ENCODE measurements at regions of chr5 and their contacts with region 1.

Region 1: DNA sequence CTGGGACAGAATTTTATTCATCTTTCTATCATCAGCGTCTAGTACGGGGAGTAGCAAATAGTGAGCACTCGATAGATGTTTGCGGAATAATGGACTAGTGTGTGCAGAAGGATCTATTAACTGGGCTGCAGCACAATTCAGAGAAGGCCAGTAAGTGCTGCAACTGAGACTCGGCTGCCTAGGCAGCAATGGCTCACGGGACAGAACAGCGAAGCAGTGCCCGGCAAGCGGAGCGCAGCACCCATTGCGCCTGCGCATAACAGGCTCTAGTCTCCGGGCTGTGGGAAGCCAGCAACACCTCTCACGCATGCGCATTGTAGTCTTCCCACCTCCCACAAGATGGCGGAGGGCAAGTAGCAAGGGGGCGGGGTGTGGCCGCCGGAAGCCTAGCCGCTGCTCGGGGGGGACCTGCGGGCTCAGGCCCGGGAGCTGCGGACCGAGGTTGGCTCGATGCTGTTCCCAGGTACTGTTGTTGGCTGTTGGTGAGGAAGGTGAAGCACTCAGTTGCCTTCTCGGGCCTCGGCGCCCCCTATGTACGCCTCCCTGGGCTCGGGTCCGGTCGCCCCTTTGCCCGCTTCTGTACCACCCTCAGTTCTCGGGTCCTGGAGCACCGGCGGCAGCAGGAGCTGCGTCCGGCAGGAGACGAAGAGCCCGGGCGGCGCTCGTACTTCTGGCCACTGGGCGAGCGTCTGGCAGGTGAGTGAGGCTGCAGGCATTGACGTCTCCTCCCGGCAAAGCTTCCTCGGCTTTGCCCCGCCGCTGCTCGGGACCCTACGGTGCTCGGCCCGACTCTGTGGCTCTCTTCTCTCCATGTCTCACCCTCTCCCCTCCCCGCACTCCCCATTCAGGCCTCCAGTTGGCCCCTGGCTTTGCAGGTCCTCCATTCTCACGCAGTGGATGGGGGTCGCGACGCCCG is 30.2 kb upstream of the APC start:
- DNase-seq: peak; percentile 86
- ATAC-seq: peak; percentile 95
- H3K4me3 Mint-ChIP-seq: peak overlapping the region; percentile 95
- H3K27ac Mint-ChIP-seq: peak overlapping the region; percentile 87
- H3K4me1 Mint-ChIP-seq: peaks cover 49% of the 10 kb centered on the region
- H3K27me3 Mint-ChIP-seq: no peaks in the 10 kb centered on the region
- CTCF ChIP-seq: no peak

Region 2: GRCh38 chr5:111092062-111092853 is 1615.2 kb before region 1 on chr5 and contains the start of gene WDR36:
- CTCF ChIA-PET with region 1: no interaction called
- POLR2A ChIA-PET with region 1: no interaction called
- intact Hi-C with region 1: loop called (anchors 10 kb)
- DNase-seq: peak; percentile 88
- ATAC-seq: peak; percentile 95
- H3K4me3 Mint-ChIP-seq: peak within 1 kb of the TSS; percentile 96
- H3K27ac Mint-ChIP-seq: peak within 1 kb of the TSS; percentile 90
- H3K4me1 Mint-ChIP-seq: peaks cover 31% of the 10 kb centered on the region
- H3K27me3 Mint-ChIP-seq: peaks cover 6% of the 10 kb centered on the region
- CTCF ChIP-seq: no peak
- total RNA-seq, gene WDR36: 42.6 and 48.6 TPM in 2 replicates

Region 3: DNA sequence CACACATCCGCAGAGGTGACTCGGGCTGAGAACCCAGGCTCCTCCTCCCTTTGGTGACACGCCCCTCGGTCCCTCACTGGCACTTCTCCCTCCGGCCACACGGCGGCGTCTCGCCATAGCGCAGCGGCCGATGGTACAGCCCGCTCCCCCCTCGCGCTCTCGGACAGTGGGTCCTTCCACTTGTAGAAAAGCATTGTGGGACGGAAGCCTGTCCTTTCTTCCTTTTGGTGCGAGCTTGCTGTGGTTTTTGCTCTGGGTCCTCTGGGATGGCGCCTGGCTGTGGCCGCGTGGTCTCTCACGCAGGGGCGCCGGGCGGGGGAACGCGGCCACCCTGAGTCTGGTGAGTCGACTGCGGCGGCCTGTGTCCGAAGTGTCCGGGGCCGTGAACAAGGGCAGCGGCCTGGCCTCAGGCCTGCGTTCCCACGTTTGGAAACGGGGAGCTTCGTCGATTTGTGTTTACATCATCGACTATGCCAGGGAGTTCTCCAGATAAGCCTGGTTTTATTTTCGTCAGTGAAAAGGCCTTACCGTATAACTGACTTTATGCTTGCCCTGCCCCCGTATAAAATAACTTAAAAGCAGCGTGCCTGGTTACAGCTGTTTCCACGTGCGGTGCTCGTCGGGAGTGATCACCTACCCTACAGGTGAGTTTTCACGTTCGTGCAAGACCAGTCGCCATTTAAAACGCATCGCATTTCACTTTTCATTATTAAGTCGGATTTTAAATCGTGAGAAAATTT is 546.6 kb before region 1 on chr5:
- CTCF ChIA-PET with region 1: no interaction called
- POLR2A ChIA-PET with region 1: interaction called, 4 read pairs
- intact Hi-C with region 1: loop called (anchors 1 kb)
- DNase-seq: peak; percentile 93
- ATAC-seq: peak; percentile 99
- H3K4me3 Mint-ChIP-seq: peak overlapping the region; percentile 97
- H3K27ac Mint-ChIP-seq: peak overlapping the region; percentile 82
- H3K4me1 Mint-ChIP-seq: peaks cover 25% of the 10 kb centered on the region
- H3K27me3 Mint-ChIP-seq: no peaks in the 10 kb centered on the region
- CTCF ChIP-seq: peak; percentile 89

Region 4: GRCh38 chr5:112685931-112686330 is 21.5 kb before region 1 on chr5:
- CTCF ChIA-PET with region 1: no interaction called
- POLR2A ChIA-PET with region 1: interaction called, 4 read pairs
- intact Hi-C with region 1: loop called (anchors 2 kb)
- DNase-seq: no peak
- ATAC-seq: no peak
- H3K4me3 Mint-ChIP-seq: no peak overlapping the region
- H3K27ac Mint-ChIP-seq: no peak overlapping the region
- H3K4me1 Mint-ChIP-seq: peaks cover 27% of the 10 kb centered on the region
- H3K27me3 Mint-ChIP-seq: no peaks in the 10 kb centered on the region
- CTCF ChIP-seq: no peak

Region 5: DNA sequence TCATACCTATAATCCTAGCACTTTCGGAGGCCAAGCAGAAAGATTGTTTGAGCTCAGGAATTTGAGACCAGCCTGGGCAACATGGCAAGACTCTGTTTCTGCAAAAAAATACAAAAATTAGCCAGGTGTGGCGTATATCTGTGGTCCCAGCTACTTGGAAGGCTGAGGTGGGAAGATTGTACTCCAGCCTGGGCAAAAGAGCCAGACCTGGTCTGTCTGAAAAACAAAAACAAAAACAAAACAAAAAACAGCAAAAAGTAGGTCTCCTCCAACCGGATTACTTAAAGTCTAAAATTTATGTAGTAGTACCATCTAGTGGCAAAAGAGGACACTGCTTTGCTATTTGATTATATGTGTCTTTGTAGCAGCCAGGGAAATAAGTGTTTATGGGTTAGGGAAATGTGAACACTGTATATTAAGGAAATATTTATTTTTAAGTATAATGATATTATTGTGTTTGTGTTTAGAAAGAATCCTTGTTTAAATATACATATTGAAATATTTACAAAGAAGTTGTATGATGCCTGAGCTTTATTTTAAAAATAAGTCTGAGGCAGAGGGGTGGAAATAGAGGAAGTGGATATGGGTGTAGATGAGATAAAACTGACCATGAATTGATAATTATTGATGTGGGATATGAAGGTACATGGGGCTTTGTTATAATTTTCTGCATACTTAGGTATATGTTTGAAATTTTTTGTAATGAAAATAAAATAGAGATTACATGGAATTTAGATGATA is 50.2 kb after region 1 on chr5:
- CTCF ChIA-PET with region 1: interaction called, 6 read pairs
- POLR2A ChIA-PET with region 1: no interaction called
- intact Hi-C with region 1: loop called (anchors 5 kb)
- DNase-seq: no peak
- ATAC-seq: peak; percentile 81
- H3K4me3 Mint-ChIP-seq: no peak overlapping the region
- H3K27ac Mint-ChIP-seq: peak overlapping the region; percentile 46
- H3K4me1 Mint-ChIP-seq: peaks cover 12% of the 10 kb centered on the region
- H3K27me3 Mint-ChIP-seq: no peaks in the 10 kb centered on the region
- CTCF ChIP-seq: peak; percentile 82

Region 6: DNA sequence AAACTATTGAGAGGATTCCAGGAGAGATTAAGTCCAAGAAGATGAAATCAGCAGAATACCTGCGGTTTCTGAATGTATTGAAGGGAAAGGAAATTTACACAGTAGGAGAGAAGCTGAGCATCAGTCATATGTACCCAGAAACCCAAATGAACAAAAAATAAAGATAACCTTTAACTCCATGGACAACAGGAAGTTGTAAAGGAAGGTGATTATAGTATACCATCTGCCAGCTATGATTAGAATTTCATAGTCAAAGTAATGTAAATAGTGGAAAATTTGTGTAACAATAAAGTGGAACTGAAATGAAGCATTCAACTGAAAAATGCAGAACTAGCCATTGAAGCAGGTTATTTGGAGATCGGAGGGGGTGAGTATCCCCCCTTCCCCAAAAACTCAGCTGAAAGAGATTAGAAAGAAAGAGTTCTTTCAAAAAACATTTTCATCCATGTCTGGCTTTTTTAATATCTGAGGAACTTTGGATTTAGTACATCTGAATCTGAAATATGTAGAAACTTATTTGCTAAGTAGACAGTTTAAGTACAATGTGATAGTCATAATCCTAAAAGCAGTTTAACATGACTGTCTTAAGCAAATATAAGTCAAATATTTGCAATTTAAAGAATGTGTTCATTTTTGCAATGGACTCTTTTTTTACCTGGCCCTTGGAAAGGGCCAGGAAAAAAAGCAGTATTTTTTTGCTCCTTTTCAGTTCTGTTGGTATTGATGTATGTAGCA is 88.7 kb after region 1 on chr5:
- CTCF ChIA-PET with region 1: no interaction called
- POLR2A ChIA-PET with region 1: no interaction called
- intact Hi-C with region 1: no loop called
- DNase-seq: no peak
- ATAC-seq: peak; percentile 83
- H3K4me3 Mint-ChIP-seq: peak overlapping the region; percentile 39
- H3K27ac Mint-ChIP-seq: peak overlapping the region; percentile 76
- H3K4me1 Mint-ChIP-seq: peaks cover 44% of the 10 kb centered on the region
- H3K27me3 Mint-ChIP-seq: no peaks in the 10 kb centered on the region
- CTCF ChIP-seq: no peak

Region 7: DNA sequence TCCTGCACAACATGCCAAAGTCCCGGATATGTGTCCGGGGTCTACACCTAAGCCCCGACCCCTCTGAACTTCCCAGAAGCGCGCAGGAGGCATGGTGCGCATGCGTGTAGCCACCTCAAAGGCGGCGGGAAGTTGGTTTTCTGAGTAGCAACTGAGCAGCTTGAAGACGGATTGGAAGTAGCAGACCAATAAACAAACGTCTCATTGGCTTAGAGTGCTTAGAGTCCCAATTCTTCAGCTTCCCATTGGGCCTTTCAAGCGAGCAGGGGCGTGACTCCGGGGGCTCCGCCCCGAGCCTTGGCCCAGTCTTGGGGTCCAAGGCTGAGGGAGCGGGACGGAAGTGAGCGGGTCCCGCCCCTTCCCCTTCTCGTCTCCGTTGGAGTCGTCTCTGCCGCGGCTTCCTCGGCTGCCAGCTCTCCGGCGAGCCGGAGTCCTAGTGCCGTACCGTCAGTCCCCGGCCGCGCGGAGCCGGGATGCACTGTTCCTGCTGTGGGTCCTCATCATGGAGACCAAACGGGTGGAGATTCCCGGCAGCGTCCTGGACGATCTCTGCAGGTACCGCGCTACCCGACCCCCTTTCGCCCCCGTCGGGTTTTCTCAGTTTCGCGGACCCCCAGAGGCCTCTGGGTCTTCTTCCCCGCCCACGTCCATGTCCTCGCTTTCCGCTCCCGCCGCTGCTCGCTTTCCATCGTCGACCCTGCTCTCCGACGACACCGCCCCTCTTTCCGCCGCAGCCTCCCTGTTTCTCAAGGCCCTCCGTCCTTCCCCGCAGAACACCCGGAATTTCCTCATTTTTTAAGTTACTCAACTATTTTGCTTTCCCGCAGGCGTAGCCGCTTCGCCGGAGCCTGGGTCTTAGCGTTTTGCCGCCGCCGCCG is 269.2 kb after region 1 on chr5 and contains the start of gene DCP2:
- CTCF ChIA-PET with region 1: no interaction called
- POLR2A ChIA-PET with region 1: interaction called, 4 read pairs
- intact Hi-C with region 1: loop called (anchors 2 kb)
- DNase-seq: peak; percentile 93
- ATAC-seq: peak; percentile 98
- H3K4me3 Mint-ChIP-seq: peak within 1 kb of the TSS; percentile 100
- H3K27ac Mint-ChIP-seq: peak within 1 kb of the TSS; percentile 96
- H3K4me1 Mint-ChIP-seq: peaks cover 53% of the 10 kb centered on the region
- H3K27me3 Mint-ChIP-seq: no peaks in the 10 kb centered on the region
- CTCF ChIP-seq: no peak
- total RNA-seq, gene DCP2: 53.5 and 56.0 TPM in 2 replicates